Aorta (tissue), 5 donors: ENCODE measurements at regions of chr16 and their contacts with region 1.

Region 1: GRCh38 chr16:2155091-2156021 is at the start of gene TRAF7:
- DNase-seq: peak; percentile 99
- ATAC-seq: peak; percentile 95
- H3K4me3 ChIP-seq: peak within 1 kb of the TSS; percentile 58 to 72
- H3K27ac ChIP-seq: peak within 1 kb of the TSS in 1 of 2 donors; percentile 33
- H3K4me1 ChIP-seq: no peaks in the 10 kb centered on the region
- H3K27me3 ChIP-seq: no peaks in the 10 kb centered on the region
- total RNA-seq, gene TRAF7: 47.7 to 54.4 TPM

Region 2: GRCh38 chr16:2223375-2224182 is 68.2 kb after region 1 on chr16 and contains the start of gene E4F1:
- intact Hi-C with region 1: loop called in 1 of 2 experiments (anchors 1 kb)
- DNase-seq: peak; percentile 100
- ATAC-seq: peak; percentile 99
- H3K4me3 ChIP-seq: peak within 1 kb of the TSS; percentile 43 to 82
- H3K27ac ChIP-seq: no peak within 1 kb of the TSS
- H3K4me1 ChIP-seq: no peaks in the 10 kb centered on the region
- H3K27me3 ChIP-seq: no peaks in the 10 kb centered on the region
- total RNA-seq, gene E4F1: 17.3 to 21.5 TPM

Region 3: DNA sequence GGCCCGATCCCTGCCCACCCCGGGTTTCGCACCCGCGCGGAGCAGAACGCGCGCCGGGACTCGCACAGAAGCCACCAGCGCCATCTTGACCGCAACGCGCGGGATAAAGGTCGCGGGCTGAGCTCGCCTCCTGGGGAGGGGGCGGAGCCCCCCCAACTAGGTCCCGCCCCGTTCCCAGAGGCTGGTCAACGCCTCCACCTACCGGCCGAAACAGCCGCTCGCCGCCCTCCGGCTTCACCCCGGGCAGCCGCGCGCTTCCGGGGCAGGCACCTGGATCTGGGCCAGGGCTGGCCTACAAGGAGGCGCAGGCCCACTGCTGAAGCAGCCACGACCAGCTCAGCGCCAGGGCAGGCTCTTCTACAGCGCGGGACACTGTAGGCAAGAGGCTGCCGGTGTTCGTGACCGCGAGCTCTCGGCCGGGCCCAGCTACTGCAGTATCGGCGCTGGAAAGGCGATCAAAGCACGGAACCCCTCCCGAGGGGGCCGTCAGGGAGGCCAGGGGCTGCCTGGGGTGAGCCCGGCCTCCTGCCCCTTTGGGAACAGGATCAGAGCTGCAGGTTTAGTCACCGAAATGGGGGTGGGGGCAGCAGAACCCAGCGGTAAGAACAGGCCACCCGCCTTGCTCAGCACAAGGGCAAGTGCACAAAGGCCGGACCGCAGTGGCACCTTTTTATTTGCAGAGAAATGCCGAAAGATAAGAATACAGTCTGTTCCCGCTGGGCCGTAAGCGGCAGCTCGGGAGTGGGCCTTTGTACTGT is 96.3 kb after region 1 on chr16 and contains the start of gene ECI1:
- intact Hi-C with region 1: loop called in 1 of 2 experiments (anchors 10 kb)
- DNase-seq: peak; percentile 98 to 99
- ATAC-seq: peak; percentile 98
- H3K4me3 ChIP-seq: peak within 1 kb of the TSS; percentile 79 to 98
- H3K27ac ChIP-seq: peak within 1 kb of the TSS in 1 of 2 donors; percentile 73
- H3K4me1 ChIP-seq: no peaks in the 10 kb centered on the region
- H3K27me3 ChIP-seq: no peaks in the 10 kb centered on the region
- total RNA-seq, gene ECI1: 28.4 to 31.3 TPM

Region 4: GRCh38 chr16:2595393-2596205 is 440.2 kb after region 1 on chr16:
- intact Hi-C with region 1: no loop called
- DNase-seq: peak; percentile 27 to 33
- ATAC-seq: no peak
- H3K4me3 ChIP-seq: no peak overlapping the region
- H3K27ac ChIP-seq: no peak overlapping the region
- H3K4me1 ChIP-seq: no peaks in the 10 kb centered on the region
- H3K27me3 ChIP-seq: no peaks in the 10 kb centered on the region